ENCODE measurements at regions of chr18 and their contacts with region 1.

Region 1: GRCh38 chr18:44700652-44701051 is 20.0 kb downstream of the SETBP1 start:
- DNase-seq: peak; percentile 16 to 69 (median 58)
- ATAC-seq: peak; percentile 72 to 75
- H3K4me3 ChIP-seq: no peak overlapping the region
- H3K27ac ChIP-seq: no peak overlapping the region
- H3K4me1 ChIP-seq: peaks cover 7% of the 10 kb centered on the region
- H3K27me3 ChIP-seq: no peaks in the 10 kb centered on the region

Region 2: GRCh38 chr18:44742704-44743311 is 42.2 kb after region 1 on chr18:
- intact Hi-C with region 1: loop called in 1 of 4 experiments (anchors 10 kb)
- DNase-seq: peak; percentile 60 to 81 (median 73)
- ATAC-seq: peak; percentile 68 to 87
- H3K4me3 ChIP-seq: no peak overlapping the region
- H3K27ac ChIP-seq: peak overlapping the region; percentile 43
- H3K4me1 ChIP-seq: peaks cover 8% of the 10 kb centered on the region
- H3K27me3 ChIP-seq: no peaks in the 10 kb centered on the region

Region 3: GRCh38 chr18:44852818-44853217 is 152.2 kb after region 1 on chr18:
- intact Hi-C with region 1: loop called in 1 of 4 experiments (anchors 10 kb)
- DNase-seq: peak in 1 of 3 donors; percentile 43
- ATAC-seq: peak; percentile 61 to 69
- H3K4me3 ChIP-seq: no peak overlapping the region
- H3K27ac ChIP-seq: no peak overlapping the region
- H3K4me1 ChIP-seq: peaks cover 4% of the 10 kb centered on the region
- H3K27me3 ChIP-seq: no peaks in the 10 kb centered on the region

Region 4: DNA sequence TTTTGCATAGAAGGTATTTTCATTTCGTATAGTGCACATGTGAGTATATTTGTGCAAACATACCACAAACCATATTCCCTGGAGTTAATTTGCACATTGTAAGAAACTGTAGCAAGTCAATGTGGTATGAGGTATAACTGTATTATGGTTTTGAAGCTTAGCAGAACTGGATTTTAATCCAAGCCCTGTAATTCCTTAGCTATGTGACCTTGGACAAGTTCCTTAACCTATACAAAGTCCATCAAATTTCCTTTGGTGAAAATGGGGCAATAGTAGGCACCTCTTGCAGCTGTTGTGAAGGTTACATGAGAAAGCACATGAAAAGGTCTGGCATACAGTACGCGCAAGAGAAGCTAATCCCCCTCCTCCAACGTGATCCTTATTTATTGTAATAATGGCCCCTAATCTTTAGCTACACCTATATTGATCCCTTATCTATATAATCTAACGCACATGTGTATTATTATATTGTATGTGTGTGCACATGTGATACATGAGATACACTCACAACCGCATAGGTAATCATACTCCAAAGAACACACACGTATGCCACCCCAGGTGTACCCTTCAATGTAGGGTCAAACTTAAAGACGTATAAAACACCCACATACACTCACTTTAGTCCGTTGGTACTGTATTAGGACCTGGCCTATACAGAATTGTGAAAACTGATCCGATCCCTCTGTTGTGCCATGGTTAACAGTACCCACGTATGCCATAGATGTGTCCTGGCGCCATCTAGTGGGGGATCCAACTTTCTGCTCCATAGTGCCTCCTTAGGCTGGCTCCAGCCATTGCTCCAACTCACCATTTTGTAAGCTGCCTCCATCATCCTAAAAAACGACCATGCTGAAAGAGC is 511.8 kb after region 1 on chr18:
- intact Hi-C with region 1: loop called in 1 of 4 experiments (anchors 10 kb)
- DNase-seq: peak; percentile 84 to 92 (median 84)
- ATAC-seq: peak; percentile 96 to 97
- H3K4me3 ChIP-seq: no peak overlapping the region
- H3K27ac ChIP-seq: no peak overlapping the region
- H3K4me1 ChIP-seq: no peaks in the 10 kb centered on the region
- H3K27me3 ChIP-seq: no peaks in the 10 kb centered on the region